Esophagus muscularis mucosa (tissue), 4 donors: ENCODE measurements at regions of chr6 and their contacts with region 1.

Region 1: GRCh38 chr6:131923356-131923755 is 27.8 kb downstream of the CCN2 start:
- DNase-seq: no peak
- H3K4me3 ChIP-seq: no peak overlapping the region
- H3K27ac ChIP-seq: no peak overlapping the region
- H3K4me1 ChIP-seq: peaks cover 0 to 5% (median 0%) of the 10 kb centered on the region in 4 donors
- H3K27me3 ChIP-seq: no peaks in the 10 kb centered on the region
- CTCF ChIP-seq: peak; percentile 40 to 60 (median 44)
- EP300 ChIP-seq: no peak
- POLR2A ChIP-seq: no peak

Region 2: DNA sequence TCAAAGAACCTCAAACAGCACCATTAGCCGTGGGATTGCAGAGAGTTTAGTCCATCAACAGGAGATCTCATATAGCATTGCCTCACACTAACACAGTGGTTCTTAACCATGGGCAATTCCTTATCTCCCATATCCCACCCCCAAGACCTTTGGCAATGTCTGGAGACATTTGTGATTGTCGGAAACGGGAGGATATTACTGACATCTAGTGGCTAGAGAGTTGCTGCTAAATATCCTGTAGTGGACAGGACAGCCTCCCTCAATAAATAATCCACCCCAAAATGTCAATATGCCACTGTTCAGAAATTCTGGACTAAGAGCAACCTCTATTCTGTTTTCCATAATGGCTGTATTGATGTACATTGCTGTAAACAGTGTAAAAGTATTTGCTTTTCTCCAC is 237.9 kb after region 1 on chr6:
- intact Hi-C with region 1: loop called (anchors 5 kb)
- DNase-seq: no peak
- H3K4me3 ChIP-seq: no peak overlapping the region
- H3K27ac ChIP-seq: no peak overlapping the region
- H3K4me1 ChIP-seq: no peaks in the 10 kb centered on the region
- H3K27me3 ChIP-seq: no peaks in the 10 kb centered on the region
- CTCF ChIP-seq: peak; percentile 65 to 69 (median 68)
- EP300 ChIP-seq: peak; percentile 17
- POLR2A ChIP-seq: no peak

Region 3: GRCh38 chr6:132215805-132216204 is 292.4 kb after region 1 on chr6:
- intact Hi-C with region 1: loop called (anchors 2 kb)
- DNase-seq: no peak
- H3K4me3 ChIP-seq: no peak overlapping the region
- H3K27ac ChIP-seq: no peak overlapping the region
- H3K4me1 ChIP-seq: peaks cover 0 to 9% (median 2%) of the 10 kb centered on the region in 4 donors
- H3K27me3 ChIP-seq: no peaks in the 10 kb centered on the region
- CTCF ChIP-seq: no peak
- EP300 ChIP-seq: no peak
- POLR2A ChIP-seq: no peak